GM13976 (cell line): ENCODE measurements at regions of chr5 and their contacts with region 1.

Region 1: GRCh38 chr5:150161242-150162141 is 5.1 kb upstream of the CDX1 start:
- DNase-seq: peak; percentile 89
- CTCF ChIP-seq: peak; percentile 93

Region 2: DNA sequence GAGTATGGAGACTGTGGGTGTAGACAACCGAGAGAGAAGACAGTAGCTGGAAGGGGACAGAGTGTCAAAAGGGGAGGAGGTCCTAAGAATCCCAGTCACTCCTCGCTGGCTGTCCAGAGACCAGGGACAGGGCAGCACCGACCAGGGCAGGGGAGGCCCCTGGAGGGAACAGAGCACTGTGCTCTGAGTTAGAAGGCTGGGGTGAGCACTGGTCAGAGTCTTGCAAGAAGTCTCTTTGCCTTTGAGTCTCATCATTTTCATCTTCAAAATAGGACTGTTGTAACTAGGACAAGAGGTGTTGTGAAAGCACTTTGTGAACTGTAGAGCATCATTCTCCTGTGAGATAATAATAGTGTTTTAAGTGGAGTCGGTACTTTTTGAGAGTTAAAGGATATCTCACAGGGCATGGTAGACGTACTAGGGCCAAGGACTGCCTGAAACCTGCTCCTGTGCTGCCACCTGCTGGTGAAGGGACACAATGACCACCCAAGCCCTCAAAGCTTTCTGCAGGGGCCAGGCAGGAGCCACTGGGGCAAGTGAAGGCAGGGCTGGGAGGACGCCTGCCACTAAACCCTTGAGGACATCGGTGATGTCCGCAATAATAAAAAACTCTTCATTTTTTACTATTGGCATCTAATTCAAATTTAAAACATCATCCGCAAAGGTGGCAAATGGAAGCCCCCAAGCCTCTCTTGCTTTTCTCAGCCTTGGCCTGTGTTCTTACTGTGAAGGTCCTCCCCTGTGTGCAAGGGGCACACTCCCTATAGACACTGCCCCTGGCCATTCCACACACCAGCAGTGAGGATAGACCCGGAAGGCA is 56.6 kb after region 1 on chr5:
- in situ Hi-C with region 1: loop called (anchors 10 kb)
- DNase-seq: peak; percentile 91
- CTCF ChIP-seq: peak; percentile 86